K562 (cell line): ENCODE measurements at regions of chr2 and their contacts with region 1.

Region 1: DNA sequence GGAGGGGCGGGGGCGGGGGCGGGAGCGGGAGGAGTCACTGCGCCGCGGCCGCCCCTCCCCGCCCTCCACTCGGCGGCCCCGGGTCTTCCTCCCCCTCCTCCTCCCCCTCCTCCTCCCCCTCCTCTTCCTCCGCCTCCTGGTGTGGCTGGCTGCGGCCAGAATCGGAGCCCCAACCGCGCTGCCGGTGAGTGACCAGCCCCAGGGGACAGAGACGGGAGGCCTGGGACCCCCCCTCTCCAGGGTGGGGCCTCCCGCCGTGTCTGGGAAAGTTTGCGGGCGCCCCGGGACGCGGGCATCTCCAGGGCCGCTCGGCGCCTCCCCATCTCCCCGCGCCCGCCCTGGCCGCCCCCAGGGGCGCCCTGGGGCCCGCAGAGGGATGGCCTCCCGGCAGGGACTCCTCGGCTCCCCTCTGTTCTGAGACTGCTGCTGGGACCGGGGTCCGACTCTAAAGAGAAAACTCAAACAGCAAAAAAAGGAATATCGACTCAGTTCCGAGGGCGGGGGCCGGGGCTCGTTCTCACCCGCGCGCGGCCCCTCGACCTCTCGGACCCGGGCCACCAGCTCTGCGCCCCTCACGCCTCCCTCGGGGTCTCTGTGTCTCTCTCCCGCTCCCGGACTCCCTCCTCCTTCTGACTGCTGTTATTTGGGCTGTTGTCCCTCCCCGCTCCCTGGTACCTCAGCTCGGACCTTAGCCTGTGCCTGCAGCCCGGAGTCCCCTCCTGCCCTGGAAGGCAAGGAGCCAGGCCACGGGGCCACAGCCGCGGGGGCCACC is at the start of gene STON1:
- DNase-seq: peak; percentile 64 to 83 (median 77)
- ATAC-seq: peak; percentile 82
- H3K4me3 ChIP-seq: peak within 1 kb of the TSS; percentile 62
- H3K27ac ChIP-seq: no peak within 1 kb of the TSS
- H3K4me1 ChIP-seq: peaks cover 3 to 12% of the 10 kb centered on the region in 2 experiments; a peak in 3 of 5 replicates
- H3K27me3 ChIP-seq: no peaks in the 10 kb centered on the region
- CTCF ChIP-seq: no peak; a peak in 1 of 6 replicates
- EP300 ChIP-seq: no peak
- POLR2A ChIP-seq: no peak
- RAD21 ChIP-seq: no peak
- polyA plus RNA-seq, gene STON1: 0.07 to 0.22 TPM

Region 2: GRCh38 chr2:48471048-48471474 is 59.2 kb before region 1 on chr2:
- CTCF ChIA-PET with region 1: no interaction called
- POLR2A ChIA-PET with region 1: no interaction called
- in situ Hi-C with region 1: no loop called
- intact Hi-C with region 1: loop called (anchors 5 kb)
- DNase-seq: peak; percentile 26 to 60 (median 38)
- ATAC-seq: peak; percentile 89
- H3K4me3 ChIP-seq: no peak overlapping the region
- H3K27ac ChIP-seq: no peak overlapping the region
- H3K4me1 ChIP-seq: no peaks in the 10 kb centered on the region
- H3K27me3 ChIP-seq: no peaks in the 10 kb centered on the region
- CTCF ChIP-seq: peak; percentile 43 to 75 (median 65); a peak in 5 of 6 replicates
- EP300 ChIP-seq: no peak
- POLR2A ChIP-seq: no peak
- RAD21 ChIP-seq: peak; percentile 37 to 60